H1 (cell line): ENCODE measurements at regions of chr17 and their contacts with region 1.

Region 1: DNA sequence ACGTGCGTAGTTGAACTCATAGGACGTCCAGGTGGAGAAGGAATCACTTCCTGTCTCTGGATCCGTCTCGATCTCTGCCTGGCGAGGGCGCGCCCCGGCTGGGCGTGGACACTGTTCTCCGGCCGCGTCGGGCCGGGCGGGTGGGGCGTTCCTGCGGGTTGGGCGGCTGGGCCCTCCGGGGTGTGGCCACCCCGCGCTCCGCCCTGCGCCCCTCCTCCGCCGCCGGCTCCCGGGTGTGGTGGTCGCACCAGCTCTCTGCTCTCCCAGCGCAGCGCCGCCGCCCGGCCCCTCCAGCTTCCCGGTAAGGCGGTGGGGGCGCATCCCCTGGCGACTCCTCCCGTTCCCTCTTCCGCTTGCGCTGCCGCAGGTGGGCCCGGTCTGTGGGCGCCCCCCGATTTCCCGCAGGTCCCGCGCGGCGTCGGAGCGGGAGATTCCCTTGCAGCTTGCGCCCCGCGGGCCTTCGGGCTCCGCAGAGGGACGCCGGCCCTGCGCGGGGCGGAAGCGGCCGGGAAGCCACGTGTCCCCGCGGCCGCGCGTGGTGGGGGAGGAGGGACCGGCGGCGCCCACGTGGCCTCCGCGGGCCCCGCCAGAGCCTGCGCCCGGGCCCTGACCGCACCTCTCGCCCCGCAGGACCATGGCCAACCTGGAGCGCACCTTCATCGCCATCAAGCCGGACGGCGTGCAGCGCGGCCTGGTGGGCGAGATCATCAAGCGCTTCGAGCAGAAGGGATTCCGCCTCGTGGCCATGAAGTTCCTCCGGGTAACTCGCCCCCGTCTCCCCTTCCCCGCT is at the start of gene NME2:
- DNase-seq: peak; percentile 74 to 96
- H3K4me3 ChIP-seq: peak within 1 kb of the TSS; percentile 65 to 95 (median 92)
- H3K27ac ChIP-seq: peak within 1 kb of the TSS; percentile 71
- H3K4me1 ChIP-seq: peaks cover 0 to 9% (median 3%) of the 10 kb centered on the region in 4 experiments; a peak in 4 of 7 replicates
- H3K27me3 ChIP-seq: no peaks in the 10 kb centered on the region
- CTCF ChIP-seq: peak in 1 of 3 experiments; percentile 46; a peak in 2 of 4 replicates
- EP300 ChIP-seq: no peak
- POLR2A ChIP-seq: peak; percentile 70 to 78
- RAD21 ChIP-seq: no peak
- total RNA-seq, gene NME2: 801 and 827 TPM in 2 replicates

Region 2: DNA sequence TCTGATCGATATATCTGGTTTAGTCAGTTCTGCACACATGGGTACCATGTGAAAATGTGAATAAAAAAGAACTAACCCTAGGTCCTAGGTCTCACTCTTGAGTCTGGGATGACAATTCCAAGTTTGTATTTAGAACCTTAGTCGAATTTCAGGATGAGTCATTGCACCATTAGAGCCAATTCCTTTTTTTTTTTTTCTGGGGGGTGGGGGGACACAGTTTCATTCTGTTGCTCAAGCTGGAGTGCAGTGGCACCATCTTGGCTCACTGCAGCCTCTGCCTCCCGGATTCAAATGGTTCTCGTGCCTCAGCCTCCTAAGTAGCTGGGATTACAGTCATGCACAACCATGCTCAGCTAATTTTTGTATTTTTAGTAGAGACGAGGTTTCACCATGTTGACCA is 87.3 kb before region 1 on chr17:
- CTCF ChIA-PET with region 1: no interaction called
- POLR2A ChIA-PET with region 1: no interaction called
- DNase-seq: peak in 1 of 2 experiments; percentile 2
- H3K4me3 ChIP-seq: no peak overlapping the region
- H3K27ac ChIP-seq: no peak overlapping the region
- H3K4me1 ChIP-seq: no peaks in the 10 kb centered on the region
- H3K27me3 ChIP-seq: no peaks in the 10 kb centered on the region
- CTCF ChIP-seq: no peak
- EP300 ChIP-seq: no peak
- POLR2A ChIP-seq: no peak
- RAD21 ChIP-seq: no peak

Region 3: GRCh38 chr17:51153210-51154072 is 13.0 kb before region 1 on chr17 and contains the start of gene NME1:
- CTCF ChIA-PET with region 1: interaction called, 7 read pairs
- POLR2A ChIA-PET with region 1: interaction called, 82 read pairs
- DNase-seq: peak; percentile 97 to 99
- H3K4me3 ChIP-seq: peak within 1 kb of the TSS; percentile 71 to 91 (median 80)
- H3K27ac ChIP-seq: peak within 1 kb of the TSS; percentile 72
- H3K4me1 ChIP-seq: peaks cover 0 to 2% (median 0%) of the 10 kb centered on the region in 4 experiments; a peak in 3 of 7 replicates
- H3K27me3 ChIP-seq: no peaks in the 10 kb centered on the region
- CTCF ChIP-seq: peak; percentile 72 to 87 (median 77)
- EP300 ChIP-seq: peak; percentile 47 to 85; a peak in 2 of 3 replicates
- POLR2A ChIP-seq: peak; percentile 84 to 88
- RAD21 ChIP-seq: peak; percentile 85 to 87
- total RNA-seq, gene NME1: 307 and 310 TPM in 2 replicates

Region 4: GRCh38 chr17:51180486-51180885 is 14.1 kb after region 1 on chr17:
- CTCF ChIA-PET with region 1: interaction called, 9 read pairs
- POLR2A ChIA-PET with region 1: interaction called, 56 read pairs
- DNase-seq: peak in 1 of 2 experiments; percentile 16
- H3K4me3 ChIP-seq: no peak overlapping the region
- H3K27ac ChIP-seq: no peak overlapping the region
- H3K4me1 ChIP-seq: no peaks in the 10 kb centered on the region
- H3K27me3 ChIP-seq: no peaks in the 10 kb centered on the region
- CTCF ChIP-seq: no peak
- EP300 ChIP-seq: no peak
- POLR2A ChIP-seq: no peak
- RAD21 ChIP-seq: no peak

Region 5: DNA sequence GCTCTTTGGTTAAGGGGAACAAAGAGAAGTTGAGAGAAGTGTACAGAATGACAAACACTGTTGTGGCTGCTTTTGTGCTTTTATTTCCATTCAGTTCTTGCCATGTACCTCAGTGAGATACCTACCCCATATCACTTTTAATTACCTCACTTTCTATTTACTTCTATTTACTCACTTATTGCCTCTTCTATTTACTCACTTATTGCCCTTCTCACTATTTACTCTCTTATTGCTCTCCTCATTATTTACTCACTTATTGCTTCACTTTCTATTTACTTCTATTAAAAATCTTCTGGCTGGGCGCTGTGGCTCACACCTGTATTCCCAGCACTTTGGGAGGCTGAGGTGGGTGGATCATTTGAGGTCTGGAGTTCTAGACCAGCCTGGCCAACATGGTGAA is 51.6 kb after region 1 on chr17:
- CTCF ChIA-PET with region 1: no interaction called
- POLR2A ChIA-PET with region 1: no interaction called
- DNase-seq: no peak
- H3K4me3 ChIP-seq: no peak overlapping the region
- H3K27ac ChIP-seq: no peak overlapping the region
- H3K4me1 ChIP-seq: no peaks in the 10 kb centered on the region
- H3K27me3 ChIP-seq: no peaks in the 10 kb centered on the region
- CTCF ChIP-seq: no peak
- EP300 ChIP-seq: no peak
- POLR2A ChIP-seq: no peak
- RAD21 ChIP-seq: no peak

Region 6: DNA sequence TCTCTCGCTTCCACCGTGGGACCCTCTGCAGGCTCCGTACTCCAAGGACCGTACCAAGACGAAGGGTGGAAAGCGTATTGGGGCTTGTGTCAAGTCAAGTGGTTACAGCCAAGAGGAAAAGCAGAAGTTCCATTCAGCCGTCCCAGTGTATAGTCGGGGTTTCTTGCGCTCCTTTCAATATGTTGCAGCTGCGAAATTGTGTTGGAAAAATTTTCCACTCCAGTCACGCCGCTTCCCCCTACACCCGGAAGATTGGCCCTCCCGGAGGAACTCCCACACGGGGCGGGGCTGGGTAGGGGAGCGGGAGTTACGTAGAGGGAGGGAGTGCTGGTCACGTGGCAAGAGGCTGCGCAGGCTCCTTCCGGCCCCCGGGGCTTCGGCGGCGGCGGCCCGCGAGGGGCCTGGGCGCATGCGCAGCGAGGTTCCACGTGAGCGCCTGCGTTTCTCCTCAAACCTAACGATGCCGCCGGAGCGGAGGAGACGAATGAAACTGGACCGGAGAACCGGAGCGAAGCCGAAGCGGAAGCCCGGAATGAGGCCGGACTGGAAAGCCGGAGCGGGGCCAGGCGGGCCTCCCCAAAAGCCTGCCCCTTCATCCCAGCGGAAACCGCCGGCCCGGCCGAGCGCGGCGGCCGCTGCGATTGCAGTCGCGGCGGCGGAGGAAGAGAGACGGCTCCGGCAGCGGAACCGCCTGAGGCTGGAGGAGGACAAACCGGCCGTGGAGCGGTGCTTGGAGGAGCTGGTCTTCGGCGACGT is 93.9 kb after region 1 on chr17 and contains the start of gene UTP18:
- CTCF ChIA-PET with region 1: no interaction called
- POLR2A ChIA-PET with region 1: interaction called, 18 read pairs
- DNase-seq: peak; percentile 90 to 94
- H3K4me3 ChIP-seq: peak within 1 kb of the TSS; percentile 83 to 96 (median 92)
- H3K27ac ChIP-seq: peak within 1 kb of the TSS; percentile 98
- H3K4me1 ChIP-seq: peaks cover 1 to 6% (median 3%) of the 10 kb centered on the region in 4 experiments; a peak in 3 of 7 replicates
- H3K27me3 ChIP-seq: no peaks in the 10 kb centered on the region
- CTCF ChIP-seq: no peak
- EP300 ChIP-seq: peak in 1 of 2 experiments; percentile 98; a peak in 2 of 3 replicates
- POLR2A ChIP-seq: no peak; a peak in 1 of 3 replicates
- RAD21 ChIP-seq: no peak
- total RNA-seq, gene UTP18: 79.6 and 85.7 TPM in 2 replicates

Region 7: DNA sequence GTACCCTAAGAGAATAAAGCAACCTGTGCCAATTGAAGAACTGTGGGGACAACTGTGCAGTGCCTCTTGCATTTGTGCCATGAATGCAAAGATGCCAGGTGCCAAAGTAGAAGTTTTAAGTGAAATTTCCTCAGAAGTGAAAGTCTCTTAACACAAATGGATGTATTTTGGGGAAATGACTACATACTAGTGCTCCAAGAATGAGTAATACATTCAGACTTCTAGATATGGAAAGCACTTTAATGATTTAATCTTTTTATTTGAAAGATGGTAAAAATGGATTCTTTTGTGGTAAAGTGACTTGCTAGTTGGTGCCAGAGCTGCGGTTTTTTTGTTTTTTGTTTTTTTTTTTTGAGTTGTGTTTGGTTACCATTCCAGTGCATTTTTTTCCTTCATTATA is 109.0 kb after region 1 on chr17:
- CTCF ChIA-PET with region 1: no interaction called
- POLR2A ChIA-PET with region 1: no interaction called
- DNase-seq: no peak
- H3K4me3 ChIP-seq: no peak overlapping the region
- H3K27ac ChIP-seq: no peak overlapping the region
- H3K4me1 ChIP-seq: no peaks in the 10 kb centered on the region
- H3K27me3 ChIP-seq: no peaks in the 10 kb centered on the region
- CTCF ChIP-seq: no peak
- EP300 ChIP-seq: no peak
- POLR2A ChIP-seq: no peak
- RAD21 ChIP-seq: no peak